Breast epithelium (tissue), 4 donors: ENCODE measurements at regions of chr19 and their contacts with region 1.

Region 1: GRCh38 chr19:46529622-46530462 is 34.2 kb upstream of the PNMA8B start:
- DNase-seq: peak; percentile 32 to 63
- H3K4me3 ChIP-seq: no peak overlapping the region
- H3K27ac ChIP-seq: no peak overlapping the region
- H3K4me1 ChIP-seq: no peaks in the 10 kb centered on the region
- H3K27me3 ChIP-seq: no peaks in the 10 kb centered on the region
- CTCF ChIP-seq: peak; percentile 66 to 88 (median 84)
- POLR2A ChIP-seq: no peak

Region 2: DNA sequence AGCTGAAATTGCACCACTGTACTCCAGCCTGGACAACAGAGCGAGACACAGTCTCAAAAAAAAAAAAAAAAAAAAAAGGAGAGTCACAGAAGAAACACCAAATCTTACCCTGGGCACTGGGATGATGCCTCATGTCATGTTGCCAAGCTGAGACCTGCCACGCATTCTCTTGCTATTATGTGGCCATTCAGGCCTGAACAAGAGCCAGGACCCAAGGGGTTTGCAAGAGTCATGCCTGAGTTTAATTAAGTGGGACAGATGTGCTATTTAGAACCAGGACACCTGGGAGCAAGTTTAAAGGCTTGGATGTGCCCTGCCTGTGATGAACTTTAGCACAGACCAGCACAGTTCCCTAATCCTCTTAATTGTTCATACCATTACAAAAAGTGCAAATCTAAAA is 68.3 kb before region 1 on chr19:
- intact Hi-C with region 1: loop called (anchors 2 kb)
- DNase-seq: peak in 1 of 2 donors; percentile 91
- H3K4me3 ChIP-seq: no peak overlapping the region
- H3K27ac ChIP-seq: peak overlapping the region in 1 of 2 donors; percentile 69
- H3K4me1 ChIP-seq: no peaks in the 10 kb centered on the region
- H3K27me3 ChIP-seq: no peaks in the 10 kb centered on the region
- CTCF ChIP-seq: no peak
- POLR2A ChIP-seq: no peak

Region 3: DNA sequence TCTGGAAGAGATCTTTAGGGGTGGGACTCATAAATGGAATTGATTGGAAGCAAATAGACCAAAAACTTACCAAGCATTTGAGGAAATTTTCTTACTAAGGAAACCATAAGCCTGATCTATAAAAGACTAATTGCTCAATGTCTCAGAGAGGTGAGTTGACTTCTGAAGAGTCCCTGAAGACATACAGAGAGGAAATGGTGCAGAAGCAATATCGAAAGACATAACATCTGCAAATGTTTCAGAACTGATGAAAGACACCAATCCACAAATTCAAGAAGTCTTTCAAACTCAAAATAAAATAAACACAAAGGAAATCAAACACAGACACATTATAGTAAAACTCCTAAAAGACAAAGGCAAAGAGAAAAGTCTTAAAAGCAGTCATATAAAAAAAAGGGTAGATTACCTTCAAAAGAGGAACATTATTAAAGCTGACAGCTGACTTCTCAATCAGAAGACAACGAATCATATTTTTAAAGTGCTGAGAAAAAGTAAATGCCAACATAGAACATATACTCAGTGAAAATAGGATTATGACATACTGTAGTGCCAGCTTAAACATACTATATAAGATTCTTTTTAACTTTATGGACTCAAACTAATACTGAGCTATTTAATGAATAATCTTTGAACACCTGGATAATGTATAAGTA is 25.9 kb after region 1 on chr19:
- intact Hi-C with region 1: no loop called
- DNase-seq: no peak
- H3K4me3 ChIP-seq: no peak overlapping the region
- H3K27ac ChIP-seq: no peak overlapping the region
- H3K4me1 ChIP-seq: no peaks in the 10 kb centered on the region
- H3K27me3 ChIP-seq: no peaks in the 10 kb centered on the region
- CTCF ChIP-seq: no peak
- POLR2A ChIP-seq: no peak